ENCODE measurements at regions of chr9 and their contacts with region 1.

Region 1: GRCh38 chr9:133375724-133376654 is at the starts of genes STKLD1 and SURF4:
- DNase-seq: peak; percentile 97
- ATAC-seq: peak; percentile 70
- H3K4me3 Mint-ChIP-seq: peak within 1 kb of the TSS; percentile 100
- H3K27ac Mint-ChIP-seq: peak within 1 kb of the TSS; percentile 99
- H3K4me1 Mint-ChIP-seq: peaks cover 35% of the 10 kb centered on the region
- H3K27me3 Mint-ChIP-seq: no peaks in the 10 kb centered on the region
- total RNA-seq, gene STKLD1: 0.40 to 0.82 TPM
- total RNA-seq, gene SURF4: 283 to 349 TPM

Region 2: GRCh38 chr9:131982671-131983239 is 1393.2 kb before region 1 on chr9:
- CTCF ChIA-PET with region 1: no interaction called
- POLR2A ChIA-PET with region 1: no interaction called
- intact Hi-C with region 1: no loop called
- DNase-seq: no peak
- ATAC-seq: no peak
- H3K4me3 Mint-ChIP-seq: no peak overlapping the region
- H3K27ac Mint-ChIP-seq: no peak overlapping the region
- H3K4me1 Mint-ChIP-seq: peaks cover 8% of the 10 kb centered on the region
- H3K27me3 Mint-ChIP-seq: no peaks in the 10 kb centered on the region

Region 3: GRCh38 chr9:132354637-132355355 is 1021.2 kb before region 1 on chr9 and contains the start of gene SETX:
- CTCF ChIA-PET with region 1: no interaction called
- POLR2A ChIA-PET with region 1: no interaction called
- intact Hi-C with region 1: loop called in 1 of 2 experiments (anchors 10 kb)
- DNase-seq: peak; percentile 98
- ATAC-seq: peak; percentile 81
- H3K4me3 Mint-ChIP-seq: peak within 1 kb of the TSS; percentile 79
- H3K27ac Mint-ChIP-seq: peak within 1 kb of the TSS; percentile 98
- H3K4me1 Mint-ChIP-seq: peaks cover 36% of the 10 kb centered on the region
- H3K27me3 Mint-ChIP-seq: no peaks in the 10 kb centered on the region
- total RNA-seq, gene SETX: 37.5 to 38.1 TPM

Region 4: DNA sequence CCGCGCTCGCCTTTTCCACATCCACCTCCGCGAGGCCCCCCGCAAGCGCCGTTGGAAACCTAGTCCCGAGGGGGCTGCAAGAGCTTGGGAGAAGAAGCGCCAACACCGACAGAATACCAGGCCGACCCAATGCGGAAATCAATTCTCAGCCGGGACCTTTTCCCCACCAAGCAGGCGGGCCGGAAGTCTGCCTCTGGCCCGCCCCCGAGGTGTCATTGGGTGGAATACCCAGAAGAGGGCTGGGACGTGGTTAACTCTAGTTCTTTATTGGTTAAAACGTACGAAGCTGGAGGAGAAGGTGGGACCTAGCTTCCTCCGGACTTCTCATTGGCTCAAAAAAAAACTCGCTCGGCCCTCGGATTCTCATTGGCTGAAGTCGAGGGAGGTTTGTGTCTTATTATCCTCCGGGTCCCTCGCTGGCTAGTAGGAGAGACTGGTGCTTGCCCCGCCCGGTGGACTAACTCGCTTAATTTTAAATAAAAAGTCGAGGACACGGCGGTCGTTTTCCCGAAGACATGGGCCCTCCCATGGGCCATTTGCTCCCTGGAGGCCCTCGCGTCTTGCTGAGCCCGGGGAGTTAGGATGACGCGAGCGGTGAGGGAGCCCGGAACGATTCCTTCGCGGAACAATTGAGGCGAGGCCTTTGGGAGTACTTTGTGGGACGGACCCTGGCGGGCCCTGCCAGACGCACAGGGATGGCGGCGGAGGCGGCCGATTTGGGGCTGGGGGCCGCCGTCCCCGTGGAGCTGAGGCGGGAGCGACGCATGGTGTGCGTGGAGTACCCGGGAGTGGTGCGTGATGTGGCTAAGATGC is 345.5 kb before region 1 on chr9 and contains the start of gene GTF3C5:
- CTCF ChIA-PET with region 1: no interaction called
- POLR2A ChIA-PET with region 1: interaction called, 6 read pairs
- intact Hi-C with region 1: loop called in 1 of 2 experiments (anchors 2 kb)
- DNase-seq: peak; percentile 95
- ATAC-seq: peak; percentile 98
- H3K4me3 Mint-ChIP-seq: peak within 1 kb of the TSS; percentile 94
- H3K27ac Mint-ChIP-seq: peak within 1 kb of the TSS; percentile 95
- H3K4me1 Mint-ChIP-seq: peaks cover 41% of the 10 kb centered on the region
- H3K27me3 Mint-ChIP-seq: no peaks in the 10 kb centered on the region
- total RNA-seq, gene GTF3C5: 81.3 to 84.5 TPM

Region 5: GRCh38 chr9:133184962-133185361 is 191.0 kb before region 1 on chr9:
- CTCF ChIA-PET with region 1: interaction called, 3 read pairs
- POLR2A ChIA-PET with region 1: interaction called, 3 read pairs
- intact Hi-C with region 1: loop called in 1 of 2 experiments (anchors 1 kb)
- DNase-seq: peak; percentile 70
- ATAC-seq: peak; percentile 54
- H3K4me3 Mint-ChIP-seq: no peak overlapping the region
- H3K27ac Mint-ChIP-seq: no peak overlapping the region
- H3K4me1 Mint-ChIP-seq: peaks cover 23% of the 10 kb centered on the region
- H3K27me3 Mint-ChIP-seq: peaks cover 14% of the 10 kb centered on the region

Region 6: GRCh38 chr9:133356391-133357091 is 19.4 kb before region 1 on chr9 and contains the starts of genes SURF1 and SURF2:
- CTCF ChIA-PET with region 1: interaction called, 44 read pairs
- POLR2A ChIA-PET with region 1: interaction called, 287 read pairs
- intact Hi-C with region 1: loop called (anchors 1 kb)
- DNase-seq: peak; percentile 96
- ATAC-seq: peak; percentile 84
- H3K4me3 Mint-ChIP-seq: peak within 1 kb of the TSS; percentile 91
- H3K27ac Mint-ChIP-seq: peak within 1 kb of the TSS; percentile 85
- H3K4me1 Mint-ChIP-seq: peaks cover 52% of the 10 kb centered on the region
- H3K27me3 Mint-ChIP-seq: no peaks in the 10 kb centered on the region
- total RNA-seq, gene SURF1: 17.4 to 29.1 TPM
- total RNA-seq, gene SURF2: 17.3 to 21.8 TPM

Region 7: DNA sequence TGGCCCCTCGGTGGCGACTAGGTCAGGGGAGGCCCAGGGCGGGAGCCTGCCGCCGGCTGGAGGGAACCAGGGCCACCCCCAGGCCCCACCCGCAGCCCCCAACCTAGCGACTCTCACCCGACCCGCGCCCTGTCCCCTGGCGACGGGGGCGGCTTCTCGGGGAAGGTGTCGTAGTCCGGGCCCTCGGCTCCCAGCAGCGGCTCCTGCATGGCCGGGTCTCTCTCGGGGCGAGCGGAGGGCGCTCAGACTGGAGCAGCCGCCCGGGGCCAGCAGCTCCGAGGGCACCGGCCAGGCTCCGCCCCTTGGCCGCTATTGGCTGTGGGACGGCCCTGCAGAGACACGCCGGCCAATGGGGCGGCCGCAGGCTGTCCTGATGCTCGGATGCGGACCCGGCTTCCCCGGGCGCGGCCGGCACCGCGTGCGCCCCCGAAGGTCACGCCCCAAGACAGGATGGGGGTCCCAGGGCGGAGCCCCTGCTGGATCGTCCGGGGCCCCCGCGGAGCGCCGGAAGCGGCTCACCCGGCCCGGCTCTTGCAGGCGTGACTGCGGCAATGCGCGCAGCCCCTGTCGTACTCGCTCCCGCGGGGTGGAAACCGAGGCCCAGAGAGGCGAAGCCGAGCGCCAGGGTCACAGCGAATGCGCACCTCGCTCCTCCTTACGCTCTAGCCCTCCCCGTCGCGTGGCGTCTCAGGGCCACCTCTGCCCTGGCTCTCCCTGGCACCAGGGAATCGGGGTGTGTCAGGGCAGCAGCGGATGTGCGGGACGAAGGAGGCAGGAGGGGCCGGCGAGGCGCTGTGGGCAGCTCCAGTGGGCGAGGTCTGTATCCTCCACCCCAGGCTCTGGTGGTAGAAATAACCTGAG is 103.1 kb after region 1 on chr9 and contains the start of gene SLC2A6:
- CTCF ChIA-PET with region 1: interaction called, 5 read pairs
- POLR2A ChIA-PET with region 1: interaction called, 3 read pairs
- intact Hi-C with region 1: loop called in 1 of 2 experiments (anchors 1 kb)
- DNase-seq: peak; percentile 89
- ATAC-seq: peak; percentile 100
- H3K4me3 Mint-ChIP-seq: peak within 1 kb of the TSS; percentile 67
- H3K27ac Mint-ChIP-seq: no peak within 1 kb of the TSS
- H3K4me1 Mint-ChIP-seq: peaks cover 6% of the 10 kb centered on the region
- H3K27me3 Mint-ChIP-seq: no peaks in the 10 kb centered on the region
- total RNA-seq, gene SLC2A6: 1.6 to 1.9 TPM

Region 8: GRCh38 chr9:133527444-133527920 is 151.5 kb after region 1 on chr9:
- CTCF ChIA-PET with region 1: no interaction called
- POLR2A ChIA-PET with region 1: no interaction called
- intact Hi-C with region 1: no loop called
- DNase-seq: no peak
- ATAC-seq: no peak
- H3K4me3 Mint-ChIP-seq: no peak overlapping the region
- H3K27ac Mint-ChIP-seq: no peak overlapping the region
- H3K4me1 Mint-ChIP-seq: peaks cover 4% of the 10 kb centered on the region
- H3K27me3 Mint-ChIP-seq: no peaks in the 10 kb centered on the region

Region 9: GRCh38 chr9:133782157-133783130 is 406.5 kb after region 1 on chr9:
- CTCF ChIA-PET with region 1: no interaction called
- POLR2A ChIA-PET with region 1: no interaction called
- intact Hi-C with region 1: no loop called
- DNase-seq: peak; percentile 85
- ATAC-seq: peak; percentile 63
- H3K4me3 Mint-ChIP-seq: no peak overlapping the region
- H3K27ac Mint-ChIP-seq: no peak overlapping the region
- H3K4me1 Mint-ChIP-seq: no peaks in the 10 kb centered on the region
- H3K27me3 Mint-ChIP-seq: no peaks in the 10 kb centered on the region

Region 10: DNA sequence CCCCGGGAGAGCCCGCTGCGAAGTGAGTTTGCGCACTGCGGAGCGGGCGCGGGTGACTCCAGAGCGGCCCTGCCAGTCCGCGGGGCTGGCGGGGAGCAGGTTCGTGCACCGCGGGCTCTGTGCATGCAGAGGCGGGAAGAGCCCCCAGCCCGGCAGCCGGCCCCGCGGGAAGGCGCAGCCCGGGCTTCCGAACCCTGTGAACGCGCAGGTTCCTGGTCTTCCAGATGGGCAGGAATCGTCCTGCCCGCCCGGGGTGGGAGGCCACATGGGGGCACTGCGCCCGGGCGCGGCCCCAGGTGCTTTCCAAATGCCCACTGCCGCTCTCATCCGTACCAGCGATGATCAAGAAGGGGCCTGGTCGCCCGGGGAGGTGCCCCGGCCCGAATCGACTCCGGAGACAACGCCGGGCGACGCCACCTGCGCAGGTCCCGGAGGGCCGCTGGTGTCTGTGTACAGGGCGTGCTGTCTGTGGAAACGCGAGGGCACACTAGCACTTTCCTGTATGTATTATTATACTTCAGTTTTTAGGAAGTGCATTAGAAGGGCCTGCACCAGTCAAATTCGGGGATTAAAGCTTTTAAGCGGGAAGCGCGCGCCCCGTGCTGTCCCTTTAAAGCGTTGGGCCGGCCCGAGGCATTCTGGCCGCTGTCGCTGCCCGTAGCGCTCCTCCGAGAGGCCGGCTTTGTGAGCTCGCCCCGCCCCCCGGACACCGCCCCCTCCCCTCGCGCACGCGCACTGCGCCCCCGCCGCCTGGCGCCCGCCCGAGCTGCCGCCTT is 759.5 kb after region 1 on chr9 and contains the start of gene WDR5:
- CTCF ChIA-PET with region 1: interaction called, 3 read pairs
- POLR2A ChIA-PET with region 1: no interaction called
- intact Hi-C with region 1: loop called in 1 of 2 experiments (anchors 2 kb)
- DNase-seq: peak; percentile 95
- ATAC-seq: peak; percentile 78
- H3K4me3 Mint-ChIP-seq: peak within 1 kb of the TSS; percentile 98
- H3K27ac Mint-ChIP-seq: peak within 1 kb of the TSS; percentile 90
- H3K4me1 Mint-ChIP-seq: peaks cover 31% of the 10 kb centered on the region
- H3K27me3 Mint-ChIP-seq: no peaks in the 10 kb centered on the region
- total RNA-seq, gene WDR5: 51.4 to 59.2 TPM

Measured in activated CD4-positive, alpha-beta T cell treated with anti-CD3 and anti-CD28 coated beads for 36 hours (primary cell).